WTC11 (cell line): ENCODE measurements at regions of chr1 and their contacts with region 1.

Region 1: GRCh38 chr1:224922404-224923164 is 6.9 kb upstream of the DNAH14 start:
- DNase-seq: no peak
- ATAC-seq: peak; percentile 98
- H3K4me3 Mint-ChIP-seq: no peak overlapping the region
- H3K27ac Mint-ChIP-seq: no peak overlapping the region
- H3K4me1 Mint-ChIP-seq: no peaks in the 10 kb centered on the region
- H3K27me3 Mint-ChIP-seq: peaks cover 1% of the 10 kb centered on the region
- CTCF ChIP-seq: peak; percentile 42

Region 2: DNA sequence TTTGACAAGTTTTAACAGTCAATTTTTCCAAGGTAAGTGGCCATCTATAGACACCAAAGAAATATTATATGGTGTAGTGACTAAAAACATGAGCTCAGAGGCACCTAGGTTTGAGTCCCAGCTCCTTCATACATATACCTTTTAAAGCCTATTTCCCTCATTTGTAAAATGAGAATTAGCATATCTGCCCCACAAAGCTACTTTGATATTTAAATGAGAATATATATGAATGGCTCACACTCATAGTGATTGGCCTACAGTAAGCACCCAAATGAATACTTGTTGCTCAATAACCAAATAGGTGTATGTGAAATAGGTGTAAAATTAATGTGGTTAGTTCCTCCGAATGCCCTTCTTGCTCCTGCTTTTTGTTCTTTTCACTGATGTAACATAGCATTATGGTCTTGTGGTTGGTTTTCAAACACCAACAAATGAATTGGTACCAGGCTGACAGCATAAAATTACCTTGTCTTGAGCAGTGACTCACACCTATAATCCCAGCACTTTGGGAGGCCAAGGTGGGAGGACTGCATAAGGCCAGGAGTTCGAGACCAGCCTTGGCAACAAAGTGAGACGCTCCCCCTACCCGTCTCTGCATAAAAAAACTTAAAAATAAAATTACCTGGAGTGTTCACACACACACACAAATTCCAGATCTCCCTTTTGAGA is 540.6 kb before region 1 on chr1:
- CTCF ChIA-PET with region 1: interaction called, 10 read pairs
- POLR2A ChIA-PET with region 1: no interaction called
- DNase-seq: no peak
- ATAC-seq: no peak
- H3K4me3 Mint-ChIP-seq: no peak overlapping the region
- H3K27ac Mint-ChIP-seq: no peak overlapping the region
- H3K4me1 Mint-ChIP-seq: no peaks in the 10 kb centered on the region
- H3K27me3 Mint-ChIP-seq: no peaks in the 10 kb centered on the region
- CTCF ChIP-seq: no peak

Region 3: GRCh38 chr1:224513787-224514209 is 408.8 kb before region 1 on chr1:
- CTCF ChIA-PET with region 1: interaction called, 76 read pairs
- POLR2A ChIA-PET with region 1: no interaction called
- DNase-seq: peak; percentile 95
- ATAC-seq: peak; percentile 93
- H3K4me3 Mint-ChIP-seq: no peak overlapping the region
- H3K27ac Mint-ChIP-seq: peak overlapping the region; percentile 26; the same call in 1 of the 2 replicates
- H3K4me1 Mint-ChIP-seq: peaks cover 15% of the 10 kb centered on the region
- H3K27me3 Mint-ChIP-seq: no peaks in the 10 kb centered on the region; the same call in 1 of the 2 replicates
- CTCF ChIP-seq: peak; percentile 86

Region 4: DNA sequence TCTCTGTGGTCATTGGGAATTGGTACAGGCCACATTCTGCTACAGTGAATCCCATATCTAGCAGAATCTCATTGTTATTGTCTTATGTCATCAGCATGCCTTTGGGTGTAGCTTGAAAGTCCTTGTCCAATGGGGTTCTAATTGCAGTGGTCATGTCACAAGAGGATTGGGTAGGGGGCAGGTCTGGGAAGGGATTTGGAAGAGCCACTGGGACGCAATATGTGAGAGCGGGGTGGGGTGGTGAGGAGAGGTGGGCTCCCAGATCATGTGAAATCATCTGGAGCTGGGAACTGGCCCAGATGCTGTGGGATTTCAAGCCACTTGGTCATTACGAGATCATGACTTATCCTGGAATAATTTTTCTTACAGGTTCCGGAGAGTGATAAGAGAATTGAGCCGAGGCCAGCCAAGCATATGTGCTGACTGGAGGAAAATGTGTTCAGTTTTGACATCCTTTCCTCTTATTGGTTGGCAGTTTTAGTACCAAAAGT is 290.2 kb before region 1 on chr1:
- CTCF ChIA-PET with region 1: interaction called, 10 read pairs
- POLR2A ChIA-PET with region 1: no interaction called
- DNase-seq: no peak
- ATAC-seq: no peak
- H3K4me3 Mint-ChIP-seq: no peak overlapping the region
- H3K27ac Mint-ChIP-seq: no peak overlapping the region
- H3K4me1 Mint-ChIP-seq: peaks cover 41% of the 10 kb centered on the region
- H3K27me3 Mint-ChIP-seq: no peaks in the 10 kb centered on the region
- CTCF ChIP-seq: no peak

Region 5: DNA sequence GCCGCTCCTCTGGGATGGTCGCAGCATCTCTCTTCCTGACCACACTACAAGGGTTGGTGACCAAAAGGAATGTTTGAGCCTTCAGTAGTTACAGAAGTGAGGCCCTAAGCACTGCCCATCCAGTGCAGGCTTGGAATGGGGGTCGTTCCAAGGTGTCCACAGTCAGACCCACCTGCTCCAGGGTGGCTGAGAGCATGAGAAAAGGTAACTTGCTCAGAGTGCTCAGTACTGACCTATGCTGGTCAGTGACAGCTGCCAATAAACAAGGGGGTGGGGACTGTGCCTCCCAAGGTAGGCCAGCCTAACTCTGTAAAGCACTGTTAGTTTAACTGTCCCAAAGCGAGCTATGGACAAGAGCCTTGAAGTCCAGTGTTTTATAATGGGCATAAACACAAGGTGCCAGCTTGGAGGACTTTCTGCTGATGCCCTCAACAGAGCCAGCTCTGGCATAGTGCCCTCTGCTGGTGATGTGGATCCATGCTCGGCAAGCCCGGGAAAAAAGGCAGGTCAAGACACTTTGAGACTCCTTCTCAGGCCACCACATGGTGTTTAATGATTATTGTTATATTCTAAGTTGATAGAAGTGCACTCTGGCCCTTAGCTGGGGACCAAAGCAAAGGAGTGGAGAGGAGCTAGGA is 71.3 kb before region 1 on chr1:
- CTCF ChIA-PET with region 1: interaction called, 58 read pairs
- POLR2A ChIA-PET with region 1: no interaction called
- DNase-seq: peak; percentile 83
- ATAC-seq: peak; percentile 67
- H3K4me3 Mint-ChIP-seq: no peak overlapping the region
- H3K27ac Mint-ChIP-seq: no peak overlapping the region
- H3K4me1 Mint-ChIP-seq: peaks cover 32% of the 10 kb centered on the region
- H3K27me3 Mint-ChIP-seq: no peaks in the 10 kb centered on the region; the same call in 1 of the 2 replicates
- CTCF ChIP-seq: peak; percentile 68

Region 6: GRCh38 chr1:224894918-224895317 is 27.7 kb before region 1 on chr1:
- CTCF ChIA-PET with region 1: interaction called, 38 read pairs
- POLR2A ChIA-PET with region 1: no interaction called
- DNase-seq: no peak
- ATAC-seq: peak; percentile 96
- H3K4me3 Mint-ChIP-seq: no peak overlapping the region
- H3K27ac Mint-ChIP-seq: no peak overlapping the region
- H3K4me1 Mint-ChIP-seq: no peaks in the 10 kb centered on the region
- H3K27me3 Mint-ChIP-seq: no peaks in the 10 kb centered on the region; the same call in 1 of the 2 replicates
- CTCF ChIP-seq: peak; percentile 46